Naive thymus-derived CD4-positive, alpha-beta T cell (primary cell): ENCODE measurements at regions of chr13 and their contacts with region 1.

Region 1: DNA sequence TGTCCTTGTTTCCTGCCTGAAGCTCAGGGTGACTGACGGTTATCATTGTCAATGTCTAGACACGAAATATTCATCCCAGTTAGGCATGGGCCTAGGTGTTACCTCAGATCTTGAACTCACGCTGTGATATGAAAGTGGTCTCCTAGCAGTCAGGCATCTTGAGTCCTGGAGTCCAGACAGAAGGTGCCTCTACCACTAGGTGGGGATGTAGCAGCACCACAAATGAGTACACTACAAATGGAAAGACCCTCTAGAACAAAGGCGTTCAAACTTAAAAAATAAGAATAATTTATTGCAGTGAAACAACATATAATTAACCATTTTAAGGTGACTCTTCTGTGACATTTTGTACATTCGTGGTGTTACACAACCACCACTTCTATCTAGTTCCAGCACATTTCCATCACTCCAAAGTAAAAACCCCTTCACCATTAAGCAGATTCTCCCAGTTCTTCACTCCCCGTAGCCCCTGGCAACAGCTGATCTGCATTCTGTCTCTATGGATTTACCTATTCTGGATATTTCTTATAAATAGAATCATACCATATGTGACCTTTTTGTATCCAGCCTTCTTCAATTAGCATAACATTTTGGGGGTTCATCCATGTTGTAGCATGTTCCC is 11.9 kb upstream of the FRY start:
- DNase-seq: peak in 6 of 9 donors; percentile 22 to 52 (median 35)
- ATAC-seq: peak; percentile 68
- H3K4me3 ChIP-seq: no peak overlapping the region
- H3K4me3 Mint-ChIP-seq: no peak overlapping the region
- H3K27ac ChIP-seq: no peak overlapping the region
- H3K27ac Mint-ChIP-seq: no peak overlapping the region
- H3K4me1 ChIP-seq: no peaks in the 10 kb centered on the region
- H3K4me1 Mint-ChIP-seq: no peaks in the 10 kb centered on the region
- H3K27me3 ChIP-seq: no peaks in the 10 kb centered on the region
- H3K27me3 Mint-ChIP-seq: peaks cover 0 to 5% (median 0%) of the 10 kb centered on the region in 5 donors

Region 2: DNA sequence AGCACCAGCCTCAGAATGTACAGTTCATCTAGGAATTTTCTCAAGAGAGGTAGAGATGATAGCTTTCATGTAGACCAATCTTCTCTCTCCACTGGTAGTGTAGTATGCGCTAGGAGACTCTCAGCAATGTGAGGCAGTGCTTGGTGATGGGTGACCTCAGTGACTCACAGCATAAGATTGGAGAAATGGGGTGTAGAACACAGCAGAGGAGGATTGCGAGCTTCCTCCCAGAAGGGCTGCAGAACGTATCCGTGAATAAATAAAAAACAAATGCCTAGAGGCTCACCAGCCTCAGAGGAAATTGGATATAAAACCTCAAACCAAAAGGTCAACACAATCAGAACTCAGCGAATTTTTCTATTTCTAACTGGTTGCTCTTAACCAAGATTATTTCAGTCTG is 463.3 kb before region 1 on chr13:
- CTCF ChIA-PET with region 1: no interaction called
- POLR2A ChIA-PET with region 1: no interaction called
- intact Hi-C with region 1: no loop called
- DNase-seq: no peak
- ATAC-seq: no peak
- H3K4me3 ChIP-seq: no peak overlapping the region
- H3K4me3 Mint-ChIP-seq: no peak overlapping the region
- H3K27ac ChIP-seq: no peak overlapping the region
- H3K27ac Mint-ChIP-seq: no peak overlapping the region
- H3K4me1 ChIP-seq: no peaks in the 10 kb centered on the region
- H3K4me1 Mint-ChIP-seq: no peaks in the 10 kb centered on the region
- H3K27me3 ChIP-seq: no peaks in the 10 kb centered on the region
- H3K27me3 Mint-ChIP-seq: peaks cover 0 to 9% (median 5%) of the 10 kb centered on the region in 5 donors

Region 3: DNA sequence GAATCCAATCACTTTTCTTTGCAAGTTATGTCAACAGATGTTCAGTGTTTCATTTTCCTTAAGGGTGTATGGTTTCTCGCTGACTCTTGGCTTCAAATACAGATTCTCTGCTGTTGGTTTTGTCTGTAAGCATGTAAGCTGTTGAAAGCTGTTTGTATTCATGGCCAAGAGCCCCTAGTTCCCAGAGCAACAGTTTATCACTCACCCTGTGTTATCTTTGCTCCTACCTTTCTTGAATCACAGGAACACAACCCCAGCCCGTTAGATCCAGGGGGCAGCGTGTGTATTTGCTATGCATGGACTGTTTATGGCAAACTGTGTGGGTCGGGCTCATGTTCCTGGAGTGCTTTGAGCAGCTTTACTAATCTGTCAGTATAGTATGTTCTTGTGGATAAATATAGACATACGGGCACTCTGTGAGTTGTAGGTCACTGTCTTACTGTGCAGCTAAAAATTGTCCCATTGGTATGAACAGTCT is 40.7 kb after region 1 on chr13:
- CTCF ChIA-PET with region 1: no interaction called
- POLR2A ChIA-PET with region 1: no interaction called
- intact Hi-C with region 1: loop called in 1 of 2 experiments (anchors 5 kb)
- DNase-seq: no peak
- ATAC-seq: no peak
- H3K4me3 ChIP-seq: no peak overlapping the region
- H3K4me3 Mint-ChIP-seq: no peak overlapping the region
- H3K27ac ChIP-seq: no peak overlapping the region
- H3K27ac Mint-ChIP-seq: no peak overlapping the region
- H3K4me1 ChIP-seq: no peaks in the 10 kb centered on the region
- H3K4me1 Mint-ChIP-seq: peaks cover 0 to 11% (median 7%) of the 10 kb centered on the region in 7 donors
- H3K27me3 ChIP-seq: no peaks in the 10 kb centered on the region
- H3K27me3 Mint-ChIP-seq: peaks cover 0 to 6% (median 0%) of the 10 kb centered on the region in 5 donors

Region 4: GRCh38 chr13:32147976-32148375 is 128.3 kb after region 1 on chr13:
- CTCF ChIA-PET with region 1: no interaction called
- POLR2A ChIA-PET with region 1: no interaction called
- intact Hi-C with region 1: loop called in 1 of 2 experiments (anchors 5 kb)
- DNase-seq: no peak
- ATAC-seq: no peak
- H3K4me3 ChIP-seq: no peak overlapping the region
- H3K4me3 Mint-ChIP-seq: no peak overlapping the region
- H3K27ac ChIP-seq: no peak overlapping the region
- H3K27ac Mint-ChIP-seq: no peak overlapping the region
- H3K4me1 ChIP-seq: no peaks in the 10 kb centered on the region
- H3K4me1 Mint-ChIP-seq: peaks cover 0 to 2% (median 0%) of the 10 kb centered on the region in 7 donors
- H3K27me3 ChIP-seq: no peaks in the 10 kb centered on the region
- H3K27me3 Mint-ChIP-seq: no peaks in the 10 kb centered on the region

Region 5: GRCh38 chr13:32234932-32235331 is 215.2 kb after region 1 on chr13:
- CTCF ChIA-PET with region 1: interaction called, 3 read pairs
- POLR2A ChIA-PET with region 1: no interaction called
- intact Hi-C with region 1: loop called in 1 of 2 experiments (anchors 10 kb)
- DNase-seq: peak in 4 of 9 donors; percentile 3 to 19 (median 9)
- ATAC-seq: no peak
- H3K4me3 ChIP-seq: no peak overlapping the region
- H3K4me3 Mint-ChIP-seq: no peak overlapping the region
- H3K27ac ChIP-seq: no peak overlapping the region
- H3K27ac Mint-ChIP-seq: peak overlapping the region in 1 of 9 donors; percentile 32
- H3K4me1 ChIP-seq: no peaks in the 10 kb centered on the region
- H3K4me1 Mint-ChIP-seq: peaks cover 0 to 15% (median 5%) of the 10 kb centered on the region in 7 donors
- H3K27me3 ChIP-seq: no peaks in the 10 kb centered on the region
- H3K27me3 Mint-ChIP-seq: no peaks in the 10 kb centered on the region

Region 6: DNA sequence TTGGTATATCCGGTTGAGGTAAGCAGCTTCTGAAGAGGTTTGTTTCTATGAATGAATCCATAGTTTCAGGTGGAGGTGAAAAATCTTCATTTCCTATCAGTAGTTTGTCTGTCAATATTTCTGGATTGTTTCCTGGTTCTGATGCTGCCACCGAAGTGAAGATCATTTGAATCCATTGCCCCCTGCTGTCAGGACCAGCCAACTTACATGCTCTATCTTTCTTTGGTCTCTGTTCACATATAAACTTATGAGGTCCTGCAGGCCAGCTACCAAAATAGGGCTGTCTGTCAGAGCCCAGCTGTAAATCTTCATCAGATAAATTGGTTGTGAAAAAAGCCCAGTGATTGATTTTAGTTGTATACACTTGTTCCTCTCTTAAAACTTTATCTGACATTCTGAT is 423.4 kb after region 1 on chr13:
- CTCF ChIA-PET with region 1: no interaction called
- POLR2A ChIA-PET with region 1: no interaction called
- intact Hi-C with region 1: loop called in 1 of 2 experiments (anchors 1 kb)
- DNase-seq: peak in 7 of 9 donors; percentile 12 to 59 (median 37)
- ATAC-seq: peak; percentile 79
- H3K4me3 ChIP-seq: no peak overlapping the region
- H3K4me3 Mint-ChIP-seq: no peak overlapping the region
- H3K27ac ChIP-seq: no peak overlapping the region
- H3K27ac Mint-ChIP-seq: peak overlapping the region in 3 of 9 donors; percentile 2 to 25 (median 6)
- H3K4me1 ChIP-seq: no peaks in the 10 kb centered on the region
- H3K4me1 Mint-ChIP-seq: peaks cover 0 to 10% (median 3%) of the 10 kb centered on the region in 7 donors
- H3K27me3 ChIP-seq: no peaks in the 10 kb centered on the region
- H3K27me3 Mint-ChIP-seq: no peaks in the 10 kb centered on the region